Spleen (tissue), 13 donors: ENCODE measurements at regions of chr2 and their contacts with region 1.

Region 1: DNA sequence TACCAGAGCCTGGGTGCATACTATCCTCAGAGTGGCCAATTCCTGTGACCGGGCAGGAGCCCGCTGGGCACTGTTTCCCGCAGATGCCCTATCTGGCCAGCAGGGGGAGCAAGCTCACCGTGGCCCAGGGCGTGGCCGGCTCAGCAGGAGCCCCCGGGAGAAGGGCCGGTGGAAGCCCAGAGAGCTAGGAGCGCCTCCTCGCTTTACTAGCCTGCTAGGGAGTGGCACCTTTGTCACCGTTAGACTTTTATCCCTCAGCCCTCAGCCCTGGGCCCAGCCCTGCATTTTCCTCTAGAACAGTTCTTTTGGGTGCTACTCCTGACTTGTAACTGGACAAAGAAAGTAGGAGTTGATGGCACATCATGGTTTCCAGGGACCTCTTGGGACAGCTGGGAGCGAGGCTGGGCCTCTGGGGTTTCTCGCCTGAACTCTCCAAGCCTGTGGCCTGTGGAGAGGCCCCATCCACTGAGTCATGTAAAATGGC is 24.0 kb downstream of the TMEM177 start:
- DNase-seq: peak; percentile 93
- H3K4me3 ChIP-seq: no peak overlapping the region
- H3K27ac ChIP-seq: no peak overlapping the region
- H3K4me1 ChIP-seq: peaks cover 0 to 9% (median 0%) of the 10 kb centered on the region in 6 donors
- H3K27me3 ChIP-seq: peaks cover 0 to 21% (median 0%) of the 10 kb centered on the region in 7 donors
- CTCF ChIP-seq: peak; percentile 71 to 97 (median 93)
- POLR2A ChIP-seq: no peak

Region 2: DNA sequence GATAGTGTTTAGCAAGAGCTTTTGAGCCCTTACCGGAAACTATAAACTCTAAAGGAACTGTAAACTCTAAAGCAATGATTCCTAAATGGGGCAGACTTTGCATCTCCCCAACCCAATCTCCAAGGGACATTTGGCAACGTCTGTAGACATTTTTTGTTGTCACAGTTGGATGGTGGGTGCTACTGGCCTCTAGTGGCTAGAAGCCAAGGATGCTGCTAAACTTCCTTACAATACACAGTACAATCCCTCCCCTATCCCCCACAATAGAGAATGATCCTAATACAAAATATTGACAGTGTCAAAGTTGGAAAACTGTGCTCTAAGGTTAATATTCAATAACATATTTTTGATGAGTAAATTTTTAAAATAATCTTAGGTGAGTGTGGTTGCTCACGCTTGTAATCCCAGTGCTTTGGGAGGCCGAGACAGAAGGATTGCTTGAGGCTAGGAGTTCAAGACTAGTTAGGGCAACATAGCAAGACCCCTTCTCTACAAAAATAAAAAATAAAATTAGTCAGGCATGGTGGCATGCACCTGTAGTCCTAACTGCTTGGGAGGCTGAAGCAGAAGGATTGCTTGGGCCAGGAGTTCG is 123.5 kb after region 1 on chr2:
- intact Hi-C with region 1: loop called (anchors 5 kb)
- DNase-seq: no peak
- H3K4me3 ChIP-seq: no peak overlapping the region
- H3K27ac ChIP-seq: no peak overlapping the region
- H3K4me1 ChIP-seq: peaks cover 0 to 20% (median 0%) of the 10 kb centered on the region in 6 donors
- H3K27me3 ChIP-seq: no peaks in the 10 kb centered on the region
- CTCF ChIP-seq: peak in 10 of 11 experiments; percentile 13 to 66 (median 45)
- POLR2A ChIP-seq: no peak

Region 3: GRCh38 chr2:120174963-120175581 is 472.1 kb after region 1 on chr2:
- intact Hi-C with region 1: loop called (anchors 10 kb)
- DNase-seq: no peak
- H3K4me3 ChIP-seq: no peak overlapping the region
- H3K27ac ChIP-seq: no peak overlapping the region
- H3K4me1 ChIP-seq: peaks cover 13 to 55% (median 27%) of the 10 kb centered on the region in 6 donors
- H3K27me3 ChIP-seq: no peaks in the 10 kb centered on the region
- CTCF ChIP-seq: peak; percentile 44 to 84 (median 67)
- POLR2A ChIP-seq: no peak